ENCODE measurements at regions of chr1 and their contacts with region 1.

Region 1: GRCh38 chr1:203117611-203118575 is 9.6 kb upstream of the ADORA1 start:
- DNase-seq: peak; percentile 89

Region 2: DNA sequence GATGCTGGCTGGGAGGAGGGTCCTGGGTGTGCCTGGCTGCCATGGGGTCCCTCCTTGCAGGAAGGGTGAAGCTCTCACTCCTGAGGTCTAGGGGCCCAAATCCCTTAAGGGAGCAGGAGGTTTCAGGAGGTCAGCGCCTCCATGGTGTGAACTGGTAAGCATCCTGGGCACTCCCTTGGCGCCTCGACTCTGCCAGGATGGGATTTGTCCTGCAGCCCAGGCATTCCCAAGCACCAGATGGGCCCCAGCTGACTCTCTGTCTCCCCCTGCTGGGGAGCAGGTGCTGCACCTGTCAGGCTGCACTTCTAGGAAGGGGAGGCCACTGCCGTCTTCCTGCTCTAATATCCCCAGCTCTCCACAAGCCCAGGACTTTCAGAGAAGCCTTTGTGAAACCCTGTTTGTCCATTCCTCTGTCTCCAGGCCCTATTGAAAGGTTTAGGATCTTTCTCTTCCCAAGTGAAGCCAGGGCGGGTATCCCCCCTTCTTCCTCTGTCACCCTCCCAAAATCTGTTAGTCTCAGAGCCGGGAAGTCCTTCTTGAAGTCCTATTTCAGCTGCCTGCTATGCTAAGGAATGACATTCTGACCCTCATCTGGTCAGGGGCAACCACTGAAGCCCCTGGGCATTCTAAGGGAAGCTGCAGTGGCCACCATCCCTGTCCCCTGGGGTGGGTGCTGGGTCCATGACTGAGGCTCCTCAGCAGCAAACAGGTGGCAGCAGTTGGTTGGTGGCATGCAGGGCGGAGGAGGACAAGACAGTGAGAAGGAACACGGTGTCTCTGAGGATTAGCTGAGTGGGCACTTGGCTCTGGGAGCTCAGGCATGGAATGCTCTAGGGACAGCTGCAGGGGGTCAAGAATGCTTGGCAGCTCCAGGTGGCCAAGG is 54.5 kb after region 1 on chr1:
- intact Hi-C with region 1: loop called (anchors 1 kb)
- DNase-seq: peak; percentile 86

Region 3: GRCh38 chr1:203216274-203217138 is 98.6 kb after region 1 on chr1:
- intact Hi-C with region 1: loop called (anchors 1 kb)
- DNase-seq: no peak

Region 4: GRCh38 chr1:203227371-203228083 is 109.6 kb after region 1 on chr1:
- intact Hi-C with region 1: no loop called
- DNase-seq: no peak

Measured in cardiac septum (tissue), 1 donor.